Aorta (tissue), 5 donors: ENCODE measurements at regions of chr16 and their contacts with region 1.

Region 1: DNA sequence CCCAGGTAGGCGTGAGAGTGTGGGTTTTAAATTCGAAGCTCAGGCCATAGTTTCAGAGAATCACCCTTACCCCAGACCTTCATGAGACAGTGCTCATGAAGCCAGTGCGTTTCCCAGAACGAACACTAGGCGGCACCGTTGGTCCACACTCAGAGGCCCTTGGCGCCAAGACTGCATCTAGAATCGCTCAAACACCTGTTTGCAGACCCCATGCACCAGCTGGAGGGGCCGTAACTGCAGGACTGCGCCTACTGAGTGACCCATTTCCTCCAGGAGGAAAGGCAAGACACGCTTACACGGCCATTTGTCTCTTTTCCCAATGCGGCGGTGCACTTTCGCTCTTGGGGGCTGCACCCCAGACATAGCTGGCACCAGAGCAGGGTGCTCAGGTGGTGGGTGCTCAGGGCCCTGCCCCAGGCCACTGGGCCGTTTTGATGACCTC is 34.0 kb downstream of the ADGRG5 start:
- DNase-seq: peak; percentile 77 to 92
- ATAC-seq: peak; percentile 71
- H3K4me3 ChIP-seq: no peak overlapping the region
- H3K27ac ChIP-seq: no peak overlapping the region
- H3K4me1 ChIP-seq: no peaks in the 10 kb centered on the region
- H3K27me3 ChIP-seq: no peaks in the 10 kb centered on the region

Region 2: DNA sequence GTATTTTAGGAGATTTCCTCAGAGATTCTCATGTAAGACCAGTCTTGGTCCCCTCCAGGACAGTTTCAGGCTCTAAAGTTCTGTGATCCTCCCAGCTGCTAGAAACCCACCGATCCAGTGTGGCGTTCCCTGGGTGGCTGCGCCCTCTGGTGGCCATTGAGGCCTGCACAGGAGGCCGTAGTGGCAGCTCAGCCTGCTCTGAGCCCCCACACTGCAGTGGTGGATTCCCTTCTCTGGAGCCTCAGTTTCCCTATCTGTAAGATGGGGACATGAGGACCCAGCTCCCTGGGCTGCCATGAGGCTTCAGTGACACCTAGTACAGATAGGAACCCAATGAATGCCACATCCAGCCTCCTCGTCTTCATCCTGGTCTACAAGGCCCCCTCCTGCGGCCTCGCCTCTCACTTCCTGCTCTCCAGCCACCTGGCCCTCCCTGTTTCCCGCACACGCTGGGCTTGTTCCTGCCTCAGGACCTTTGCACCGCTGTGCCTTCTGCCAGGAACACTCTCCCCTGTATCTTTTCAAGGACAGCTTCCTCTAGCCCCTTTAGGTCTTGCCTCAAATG is 56.6 kb before region 1 on chr16:
- intact Hi-C with region 1: no loop called
- DNase-seq: peak; percentile 80 to 94
- ATAC-seq: peak; percentile 77
- H3K4me3 ChIP-seq: no peak overlapping the region
- H3K27ac ChIP-seq: no peak overlapping the region
- H3K4me1 ChIP-seq: no peaks in the 10 kb centered on the region
- H3K27me3 ChIP-seq: no peaks in the 10 kb centered on the region

Region 3: GRCh38 chr16:57720142-57720575 is 143.7 kb after region 1 on chr16:
- intact Hi-C with region 1: loop called in 1 of 2 experiments (anchors 10 kb)
- DNase-seq: peak in 1 of 2 donors; percentile 75
- ATAC-seq: no peak
- H3K4me3 ChIP-seq: no peak overlapping the region
- H3K27ac ChIP-seq: no peak overlapping the region
- H3K4me1 ChIP-seq: no peaks in the 10 kb centered on the region
- H3K27me3 ChIP-seq: no peaks in the 10 kb centered on the region

Region 4: GRCh38 chr16:57757326-57757786 is 180.9 kb after region 1 on chr16:
- intact Hi-C with region 1: no loop called
- DNase-seq: peak; percentile 92 to 97
- ATAC-seq: peak; percentile 88
- H3K4me3 ChIP-seq: no peak overlapping the region
- H3K27ac ChIP-seq: no peak overlapping the region
- H3K4me1 ChIP-seq: no peaks in the 10 kb centered on the region
- H3K27me3 ChIP-seq: no peaks in the 10 kb centered on the region